ENCODE measurements at regions of chr4 and their contacts with region 1.

Region 1: GRCh38 chr4:136355970-136356369 is 1176.3 kb downstream of the PCDH18 start:
- DNase-seq: no peak
- H3K4me3 Mint-ChIP-seq: no peak overlapping the region
- H3K27ac Mint-ChIP-seq: no peak overlapping the region
- H3K4me1 Mint-ChIP-seq: no peaks in the 10 kb centered on the region
- H3K27me3 Mint-ChIP-seq: no peaks in the 10 kb centered on the region

Region 2: GRCh38 chr4:135226287-135226686 is 1129.7 kb before region 1 on chr4:
- CTCF ChIA-PET with region 1: no interaction called
- intact Hi-C with region 1: loop called (anchors 5 kb)
- DNase-seq: no peak
- H3K4me3 Mint-ChIP-seq: no peak overlapping the region
- H3K27ac Mint-ChIP-seq: no peak overlapping the region
- H3K4me1 Mint-ChIP-seq: no peaks in the 10 kb centered on the region
- H3K27me3 Mint-ChIP-seq: no peaks in the 10 kb centered on the region

Region 3: GRCh38 chr4:135354876-135355275 is 1001.1 kb before region 1 on chr4:
- CTCF ChIA-PET with region 1: no interaction called
- intact Hi-C with region 1: no loop called
- DNase-seq: no peak
- H3K4me3 Mint-ChIP-seq: no peak overlapping the region
- H3K27ac Mint-ChIP-seq: no peak overlapping the region
- H3K4me1 Mint-ChIP-seq: no peaks in the 10 kb centered on the region
- H3K27me3 Mint-ChIP-seq: no peaks in the 10 kb centered on the region

Region 4: DNA sequence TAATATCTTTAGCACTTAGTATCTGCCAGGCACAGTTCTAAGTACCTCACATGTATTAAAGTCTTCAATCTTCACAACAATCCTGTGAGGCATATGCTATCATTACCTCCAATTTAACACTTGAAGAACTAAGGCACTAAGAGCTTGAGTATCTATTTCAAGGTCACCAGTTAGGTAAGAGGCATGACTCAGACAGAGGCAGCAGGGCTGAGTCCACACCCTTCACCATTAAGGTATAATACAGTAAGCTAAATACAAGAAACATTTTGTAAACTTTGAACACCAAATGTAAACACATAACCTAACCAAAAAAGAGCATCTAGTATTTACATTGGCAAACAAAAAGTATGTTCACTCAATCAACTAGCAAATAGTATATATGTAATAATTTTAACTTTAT is 234.5 kb before region 1 on chr4:
- CTCF ChIA-PET with region 1: no interaction called
- intact Hi-C with region 1: no loop called
- DNase-seq: no peak
- H3K4me3 Mint-ChIP-seq: no peak overlapping the region
- H3K27ac Mint-ChIP-seq: no peak overlapping the region
- H3K4me1 Mint-ChIP-seq: no peaks in the 10 kb centered on the region
- H3K27me3 Mint-ChIP-seq: no peaks in the 10 kb centered on the region

Measured in activated naive CD4-positive, alpha-beta T cell treated with anti-CD3 and anti-CD28 coated beads for 36 hours (primary cell).